ENCODE measurements at regions of chr1 and their contacts with region 1.

Region 1: DNA sequence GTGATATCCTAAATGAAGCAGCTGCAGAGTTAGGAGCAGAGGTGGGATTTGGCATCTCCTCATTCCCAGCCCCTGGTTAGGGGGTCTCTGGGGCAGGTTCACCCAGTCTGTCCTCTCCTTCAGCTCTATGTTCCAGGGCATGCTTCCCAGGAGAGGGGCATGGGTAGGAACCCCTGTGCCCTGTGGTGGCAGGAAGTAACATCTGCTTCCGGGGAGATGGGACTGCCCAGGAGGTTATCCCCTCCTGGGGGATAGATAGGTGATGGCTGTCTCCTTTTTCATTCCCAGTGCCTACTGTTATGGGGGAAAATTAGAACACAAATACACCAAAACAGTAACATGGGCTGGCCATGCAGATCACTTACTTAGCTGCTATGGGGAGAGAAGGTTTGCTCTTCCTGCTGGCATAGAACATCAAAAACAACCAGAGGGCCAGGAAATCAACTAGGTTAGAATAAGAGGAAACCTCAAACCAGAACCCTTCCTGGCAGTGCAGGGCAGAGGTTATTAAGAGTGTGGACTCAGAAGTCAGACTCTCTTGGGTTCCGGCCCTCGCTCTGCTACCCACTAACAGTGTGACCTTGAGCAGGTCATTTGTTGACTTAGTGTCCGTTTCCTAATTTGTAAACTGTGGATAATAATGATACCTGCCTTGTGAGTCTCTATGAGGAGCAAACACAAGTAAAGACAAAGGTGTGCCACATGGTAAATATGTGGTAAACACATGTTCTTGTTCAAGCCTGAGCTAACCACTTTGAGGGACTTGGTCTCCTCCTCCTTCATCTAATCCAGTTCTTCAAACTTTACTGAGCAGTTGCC is 157.8 kb upstream of the JUN start:
- DNase-seq: peak in 7 of 9 experiments; percentile 13 to 79 (median 44)
- ATAC-seq: peak; percentile 71
- H3K4me3 ChIP-seq: peak overlapping the region; percentile 15 to 36
- H3K4me3 Mint-ChIP-seq: peak overlapping the region; percentile 73
- H3K27ac ChIP-seq: peak overlapping the region in 1 of 2 experiments; percentile 28
- H3K27ac Mint-ChIP-seq: peak overlapping the region; percentile 82
- H3K4me1 ChIP-seq: peaks cover 64% of the 10 kb centered on the region
- H3K4me1 Mint-ChIP-seq: peaks cover 81% of the 10 kb centered on the region
- H3K27me3 ChIP-seq: no peaks in the 10 kb centered on the region
- H3K27me3 Mint-ChIP-seq: no peaks in the 10 kb centered on the region
- CTCF ChIP-seq: no peak

Region 2: DNA sequence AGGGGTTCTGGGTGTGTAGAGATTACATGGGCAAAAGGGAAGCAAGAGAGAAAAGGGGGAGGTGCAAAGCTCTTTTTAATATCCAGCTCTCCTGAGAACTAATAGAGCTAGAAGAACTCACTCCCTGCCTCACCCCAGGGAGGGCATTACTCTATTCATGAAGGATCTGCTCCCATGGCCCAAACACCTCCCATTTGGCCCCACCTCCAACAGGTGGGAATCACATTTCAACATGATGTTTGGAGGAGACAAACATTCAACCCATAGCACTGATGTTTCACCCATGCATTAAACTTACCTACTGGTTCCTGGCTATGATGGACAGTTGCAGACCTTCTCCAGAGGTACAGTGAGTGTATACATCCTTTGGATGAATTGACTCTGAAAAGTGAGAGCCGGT is 150.6 kb before region 1 on chr1:
- CTCF ChIA-PET with region 1: no interaction called
- POLR2A ChIA-PET with region 1: no interaction called
- intact Hi-C with region 1: loop called in 1 of 2 experiments (anchors 5 kb)
- DNase-seq: no peak
- ATAC-seq: no peak
- H3K4me3 ChIP-seq: no peak overlapping the region
- H3K4me3 Mint-ChIP-seq: no peak overlapping the region
- H3K27ac ChIP-seq: no peak overlapping the region
- H3K27ac Mint-ChIP-seq: no peak overlapping the region
- H3K4me1 ChIP-seq: no peaks in the 10 kb centered on the region
- H3K4me1 Mint-ChIP-seq: peaks cover 58% of the 10 kb centered on the region
- H3K27me3 ChIP-seq: no peaks in the 10 kb centered on the region
- H3K27me3 Mint-ChIP-seq: no peaks in the 10 kb centered on the region
- CTCF ChIP-seq: no peak

Region 3: GRCh38 chr1:58893257-58893869 is 48.3 kb before region 1 on chr1:
- CTCF ChIA-PET with region 1: no interaction called
- POLR2A ChIA-PET with region 1: no interaction called
- intact Hi-C with region 1: no loop called
- DNase-seq: no peak
- ATAC-seq: no peak
- H3K4me3 ChIP-seq: no peak overlapping the region
- H3K4me3 Mint-ChIP-seq: no peak overlapping the region
- H3K27ac ChIP-seq: no peak overlapping the region
- H3K27ac Mint-ChIP-seq: no peak overlapping the region
- H3K4me1 ChIP-seq: no peaks in the 10 kb centered on the region
- H3K4me1 Mint-ChIP-seq: peaks cover 26% of the 10 kb centered on the region
- H3K27me3 ChIP-seq: no peaks in the 10 kb centered on the region
- H3K27me3 Mint-ChIP-seq: no peaks in the 10 kb centered on the region
- CTCF ChIP-seq: no peak

Region 4: DNA sequence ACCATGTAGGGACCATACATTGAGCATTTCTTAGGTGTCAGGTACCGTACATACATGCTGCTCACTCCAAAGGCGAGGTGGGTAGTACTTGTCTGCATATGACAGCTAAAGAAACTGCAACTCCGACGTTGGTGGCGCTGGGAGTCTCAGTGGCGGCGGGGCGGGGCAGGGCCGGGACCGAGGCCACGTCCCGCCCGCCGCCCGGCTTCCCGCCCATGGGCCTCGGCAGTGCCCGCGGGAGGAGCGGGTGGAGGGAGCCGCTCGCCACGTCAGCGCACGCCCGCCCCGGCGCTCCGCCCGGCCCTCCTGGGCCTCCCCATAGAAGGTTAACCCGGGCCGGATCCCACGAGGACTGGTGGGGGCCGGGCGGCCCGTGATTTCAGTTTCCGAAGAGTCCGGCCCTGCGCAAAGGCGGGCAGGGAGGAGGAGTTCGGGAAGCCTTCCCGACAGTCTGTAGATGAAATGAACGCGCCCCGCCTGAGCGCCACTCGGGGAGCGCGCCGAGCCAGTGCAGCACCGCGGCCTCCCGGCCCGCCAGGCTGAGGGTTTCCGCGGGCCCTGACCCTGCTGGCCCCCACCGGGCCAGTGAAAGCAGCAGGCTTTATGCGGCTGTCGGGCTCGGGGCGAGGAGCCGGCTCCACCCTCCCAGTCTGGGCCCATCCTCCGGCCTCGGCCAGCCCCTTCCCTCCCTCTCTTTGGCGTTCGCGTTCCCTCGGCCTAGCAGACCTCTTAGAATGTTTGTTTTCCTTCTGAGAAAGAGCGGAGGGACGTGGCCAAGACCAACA is 38.0 kb before region 1 on chr1:
- CTCF ChIA-PET with region 1: interaction called, 3 read pairs
- POLR2A ChIA-PET with region 1: interaction called, 3 read pairs
- intact Hi-C with region 1: loop called in 1 of 2 experiments (anchors 5 kb)
- DNase-seq: peak; percentile 33 to 83 (median 69)
- ATAC-seq: peak; percentile 86
- H3K4me3 ChIP-seq: peak overlapping the region; percentile 47 to 53
- H3K4me3 Mint-ChIP-seq: peak overlapping the region; percentile 82
- H3K27ac ChIP-seq: peak overlapping the region; percentile 34 to 76
- H3K27ac Mint-ChIP-seq: peak overlapping the region; percentile 84
- H3K4me1 ChIP-seq: peaks cover 11% of the 10 kb centered on the region
- H3K4me1 Mint-ChIP-seq: peaks cover 18% of the 10 kb centered on the region
- H3K27me3 ChIP-seq: no peaks in the 10 kb centered on the region
- H3K27me3 Mint-ChIP-seq: no peaks in the 10 kb centered on the region
- CTCF ChIP-seq: no peak

Region 5: DNA sequence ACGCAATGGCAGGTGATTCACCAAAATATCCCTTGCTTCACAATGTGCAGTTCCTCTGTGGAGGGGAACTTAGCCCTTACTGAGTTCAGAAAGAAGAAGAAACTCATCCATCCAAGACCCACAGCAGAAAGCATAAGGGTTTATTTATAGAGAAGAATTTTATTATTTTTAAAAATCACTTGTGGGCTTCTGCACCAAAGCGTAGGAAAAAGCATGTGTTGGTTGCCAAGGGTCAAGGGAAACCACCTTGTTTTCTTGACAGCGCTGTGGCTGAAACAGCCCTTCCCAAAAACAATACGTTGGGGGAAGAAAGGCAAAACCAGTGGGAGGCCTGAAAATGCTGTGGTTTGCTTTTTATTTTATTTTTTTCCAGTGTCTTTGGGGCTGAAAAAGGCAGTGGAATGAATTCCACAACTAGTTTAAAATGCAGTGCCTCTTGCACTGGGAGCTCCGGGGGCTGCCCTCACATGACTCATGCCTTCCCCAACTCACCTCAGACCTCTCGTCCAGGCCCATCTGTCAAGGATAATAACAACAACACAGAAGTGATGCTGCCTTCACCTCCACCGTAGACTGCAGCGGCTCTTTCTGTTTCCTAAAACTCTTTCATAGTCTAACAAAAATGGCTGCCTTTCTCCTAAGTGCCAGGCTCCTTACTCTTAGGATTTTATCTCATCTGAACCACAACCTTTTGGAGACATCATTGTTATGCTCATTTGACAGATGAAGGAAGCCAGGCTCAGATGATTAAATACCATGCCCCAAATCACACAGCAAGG is 66.3 kb after region 1 on chr1:
- CTCF ChIA-PET with region 1: no interaction called
- POLR2A ChIA-PET with region 1: no interaction called
- intact Hi-C with region 1: loop called in 1 of 2 experiments (anchors 5 kb)
- DNase-seq: peak in 1 of 9 experiments; percentile 44
- ATAC-seq: no peak
- H3K4me3 ChIP-seq: no peak overlapping the region
- H3K4me3 Mint-ChIP-seq: no peak overlapping the region
- H3K27ac ChIP-seq: no peak overlapping the region
- H3K27ac Mint-ChIP-seq: no peak overlapping the region
- H3K4me1 ChIP-seq: peaks cover 19% of the 10 kb centered on the region
- H3K4me1 Mint-ChIP-seq: peaks cover 35% of the 10 kb centered on the region
- H3K27me3 ChIP-seq: no peaks in the 10 kb centered on the region
- H3K27me3 Mint-ChIP-seq: no peaks in the 10 kb centered on the region
- CTCF ChIP-seq: no peak

Region 6: DNA sequence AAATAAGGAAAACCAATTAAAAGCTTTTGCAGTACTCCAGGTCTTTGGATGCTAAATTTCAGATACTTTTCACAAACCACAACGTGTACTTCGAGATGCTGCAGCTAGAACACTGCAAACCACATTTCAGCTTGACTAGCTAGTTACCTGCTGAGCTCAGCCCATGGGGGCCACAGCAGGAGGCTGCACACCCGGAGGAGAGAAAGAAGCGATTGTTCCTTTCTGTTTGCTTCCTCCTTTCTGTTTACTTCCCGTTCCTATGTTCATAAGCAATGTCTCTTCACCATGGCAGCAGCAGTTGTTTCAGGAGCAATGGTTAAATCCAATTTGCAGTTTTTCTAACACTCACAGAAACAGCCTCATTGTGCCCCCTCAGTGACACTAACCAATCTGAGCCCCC is 129.6 kb after region 1 on chr1:
- CTCF ChIA-PET with region 1: no interaction called
- POLR2A ChIA-PET with region 1: no interaction called
- intact Hi-C with region 1: loop called in 1 of 2 experiments (anchors 5 kb)
- DNase-seq: peak in 5 of 9 experiments; percentile 18 to 61 (median 27)
- ATAC-seq: peak; percentile 70
- H3K4me3 ChIP-seq: no peak overlapping the region
- H3K4me3 Mint-ChIP-seq: peak overlapping the region; percentile 68
- H3K27ac ChIP-seq: peak overlapping the region in 1 of 2 experiments; percentile 40
- H3K27ac Mint-ChIP-seq: peak overlapping the region; percentile 92
- H3K4me1 ChIP-seq: peaks cover 27% of the 10 kb centered on the region
- H3K4me1 Mint-ChIP-seq: peaks cover 28% of the 10 kb centered on the region
- H3K27me3 ChIP-seq: no peaks in the 10 kb centered on the region
- H3K27me3 Mint-ChIP-seq: no peaks in the 10 kb centered on the region
- CTCF ChIP-seq: no peak

Region 7: GRCh38 chr1:59146651-59147358 is 205.1 kb after region 1 on chr1:
- CTCF ChIA-PET with region 1: no interaction called
- POLR2A ChIA-PET with region 1: no interaction called
- intact Hi-C with region 1: loop called in 1 of 2 experiments (anchors 5 kb)
- DNase-seq: peak; percentile 13 to 79 (median 36)
- ATAC-seq: peak; percentile 77
- H3K4me3 ChIP-seq: peak overlapping the region; percentile 60 to 63
- H3K4me3 Mint-ChIP-seq: peak overlapping the region; percentile 90
- H3K27ac ChIP-seq: peak overlapping the region in 1 of 2 experiments; percentile 51
- H3K27ac Mint-ChIP-seq: peak overlapping the region; percentile 87
- H3K4me1 ChIP-seq: peaks cover 5% of the 10 kb centered on the region
- H3K4me1 Mint-ChIP-seq: peaks cover 18% of the 10 kb centered on the region
- H3K27me3 ChIP-seq: no peaks in the 10 kb centered on the region
- H3K27me3 Mint-ChIP-seq: no peaks in the 10 kb centered on the region
- CTCF ChIP-seq: peak; percentile 23

Measured in CD8-positive, alpha-beta T cell (primary cell).